ENCODE measurements at regions of chr1 and their contacts with region 1.

Region 1: GRCh38 chr1:149899460-149900293 is at the start of gene BOLA1:
- DNase-seq: peak; percentile 91 to 94
- ATAC-seq: peak; percentile 99
- total RNA-seq, gene BOLA1: 11.0 to 12.6 TPM

Region 2: GRCh38 chr1:150067184-150068036 is 167.7 kb after region 1 on chr1 and contains the start of gene VPS45:
- intact Hi-C with region 1: loop called in 1 of 2 experiments (anchors 10 kb)
- DNase-seq: peak; percentile 91 to 93
- ATAC-seq: peak; percentile 98
- total RNA-seq, gene VPS45: 27.3 to 32.0 TPM

Region 3: GRCh38 chr1:150162862-150163706 is 263.4 kb after region 1 on chr1:
- intact Hi-C with region 1: loop called in 1 of 2 experiments (anchors 10 kb)
- DNase-seq: peak; percentile 72 to 91
- ATAC-seq: peak; percentile 83